ENCODE measurements at regions of chr1 and their contacts with region 1.

Region 1: GRCh38 chr1:227449051-227449450 is 114.3 kb upstream of the ZNF678 start:
- DNase-seq: peak; percentile 58
- H3K27ac ChIP-seq: no peak overlapping the region
- CTCF ChIP-seq: peak; percentile 28; the same call in 1 of the 2 replicates

Region 2: GRCh38 chr1:227434808-227435444 is 14.1 kb before region 1 on chr1:
- CTCF ChIA-PET with region 1: interaction called, 19 read pairs
- POLR2A ChIA-PET with region 1: no interaction called
- DNase-seq: no peak
- H3K27ac ChIP-seq: no peak overlapping the region
- CTCF ChIP-seq: no peak

Measured in RWPE1 (cell line).